Adrenal gland (tissue), 19 donors: ENCODE measurements at regions of chr5 and their contacts with region 1.

Region 1: GRCh38 chr5:59673438-59674058 is 220.0 kb downstream of the PDE4D start:
- DNase-seq: peak in 1 of 7 donors; percentile 2
- H3K4me3 ChIP-seq: no peak overlapping the region
- H3K27ac ChIP-seq: no peak overlapping the region
- H3K4me1 ChIP-seq: no peaks in the 10 kb centered on the region
- H3K27me3 ChIP-seq: no peaks in the 10 kb centered on the region
- CTCF ChIP-seq: peak; percentile 66 to 90 (median 68)
- POLR2A ChIP-seq: no peak

Region 2: GRCh38 chr5:59390074-59390659 is 283.4 kb before region 1 on chr5:
- intact Hi-C with region 1: loop called in 1 of 2 experiments (anchors 5 kb)
- DNase-seq: peak in 2 of 7 donors; percentile 29 to 34
- H3K4me3 ChIP-seq: no peak overlapping the region
- H3K27ac ChIP-seq: no peak overlapping the region
- H3K4me1 ChIP-seq: no peaks in the 10 kb centered on the region
- H3K27me3 ChIP-seq: no peaks in the 10 kb centered on the region
- CTCF ChIP-seq: peak; percentile 40 to 77 (median 56)
- POLR2A ChIP-seq: no peak

Region 3: DNA sequence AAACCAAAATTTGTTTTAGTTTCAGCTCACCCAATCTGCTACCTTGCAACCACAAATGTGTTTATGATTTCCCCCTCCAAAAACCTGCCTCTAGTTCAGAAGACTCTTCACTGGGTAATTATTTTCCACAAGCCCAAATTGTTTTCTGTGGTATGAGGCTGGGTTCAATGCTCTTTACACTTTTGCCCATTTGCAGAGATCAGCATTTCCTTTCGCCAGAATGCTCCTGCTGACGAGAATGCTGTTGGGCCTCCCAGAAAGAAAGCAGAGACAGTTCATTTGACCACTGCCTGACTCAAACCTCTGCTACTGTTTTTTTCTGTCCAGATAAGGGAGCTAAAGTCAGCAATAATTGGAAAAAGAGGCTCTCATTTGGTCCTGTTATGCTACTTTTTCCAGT is 207.3 kb before region 1 on chr5:
- intact Hi-C with region 1: no loop called
- DNase-seq: no peak
- H3K4me3 ChIP-seq: no peak overlapping the region
- H3K27ac ChIP-seq: no peak overlapping the region
- H3K4me1 ChIP-seq: no peaks in the 10 kb centered on the region
- H3K27me3 ChIP-seq: no peaks in the 10 kb centered on the region
- CTCF ChIP-seq: no peak
- POLR2A ChIP-seq: no peak

Region 4: DNA sequence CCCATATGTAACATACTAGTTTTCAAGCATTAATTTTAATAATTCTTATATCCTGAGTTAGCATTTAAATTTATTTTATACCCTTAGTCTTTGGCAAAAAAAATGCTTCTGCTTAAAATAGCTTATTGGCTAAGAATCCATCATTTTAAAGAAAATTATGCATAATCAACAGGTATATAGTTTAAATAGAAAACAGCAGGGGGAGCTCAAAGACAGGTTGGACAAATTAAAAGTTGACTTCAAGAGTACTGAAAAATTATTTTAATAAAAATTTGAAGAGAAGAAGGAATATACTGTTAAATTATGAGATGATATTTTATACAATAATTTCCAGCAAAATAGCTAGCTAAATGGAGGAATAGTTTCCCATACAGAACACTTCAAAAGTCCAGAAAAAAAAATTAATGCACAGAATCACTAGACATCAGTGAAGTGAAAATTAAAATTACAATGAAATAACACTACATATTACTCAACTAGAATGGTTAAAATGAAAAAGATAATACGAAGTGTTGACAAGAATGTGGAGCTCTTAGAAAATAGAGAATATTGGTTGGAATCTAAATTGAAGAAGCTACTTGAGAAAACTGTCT is 167.2 kb before region 1 on chr5:
- intact Hi-C with region 1: loop called in 1 of 2 experiments (anchors 5 kb)
- DNase-seq: no peak
- H3K4me3 ChIP-seq: no peak overlapping the region
- H3K27ac ChIP-seq: no peak overlapping the region
- H3K4me1 ChIP-seq: no peaks in the 10 kb centered on the region
- H3K27me3 ChIP-seq: no peaks in the 10 kb centered on the region
- CTCF ChIP-seq: peak; percentile 4 to 55 (median 33)
- POLR2A ChIP-seq: no peak